ENCODE measurements at regions of chr4 and their contacts with region 1.

Region 1: GRCh38 chr4:151781026-151781425 is 20.2 kb upstream of the GATB start:
- DNase-seq: peak; percentile 61 to 77 (median 68)
- ATAC-seq: peak; percentile 94 to 96 (median 96)
- H3K4me3 ChIP-seq: no peak overlapping the region
- H3K27ac ChIP-seq: peak overlapping the region; percentile 18 to 86 (median 67)
- H3K4me1 ChIP-seq: peaks cover 0 to 32% (median 6%) of the 10 kb centered on the region in 12 donors
- H3K27me3 ChIP-seq: peaks cover 0 to 11% (median 0%) of the 10 kb centered on the region in 9 donors
- CTCF ChIP-seq: no peak
- POLR2A ChIP-seq: peak in 1 of 2 donors; percentile 30

Region 2: DNA sequence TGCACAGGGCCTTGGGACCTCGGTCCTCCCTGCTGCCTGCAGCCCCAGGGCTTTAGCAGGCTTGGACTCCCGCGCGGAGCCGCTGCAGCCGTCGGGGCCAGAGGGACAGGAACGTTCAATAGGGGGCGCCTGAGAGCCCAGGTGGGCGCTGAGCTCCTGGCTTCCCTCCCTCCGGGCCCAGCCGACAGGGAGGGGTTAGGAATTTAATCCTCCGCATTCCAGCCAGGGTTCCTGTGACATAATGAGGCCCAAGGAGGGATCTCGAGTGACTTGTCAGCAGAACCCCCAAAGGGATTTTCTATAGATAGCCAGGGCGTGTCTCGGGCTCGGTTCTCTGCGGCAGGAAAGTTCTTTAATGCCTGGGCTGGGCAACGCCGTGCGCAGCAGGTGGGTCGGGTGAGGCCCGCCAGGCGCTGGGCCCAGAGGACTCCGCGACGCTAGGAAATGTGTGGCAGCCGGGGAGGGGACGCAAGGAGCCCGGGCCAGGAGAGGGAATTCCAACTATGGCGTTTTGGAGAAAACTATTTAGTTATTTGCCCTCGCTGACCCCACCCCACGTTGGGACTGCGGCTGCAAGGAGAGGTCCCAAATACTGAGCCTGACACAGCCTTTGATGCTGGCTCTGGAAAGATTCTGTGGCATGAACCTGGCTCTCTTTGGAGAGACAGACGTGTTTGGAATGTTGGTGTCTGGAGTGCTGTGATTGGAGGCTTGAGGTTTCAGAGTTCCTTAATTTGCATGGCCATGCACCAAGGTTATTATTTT is 265.0 kb after region 1 on chr4:
- intact Hi-C with region 1: loop called in 1 of 10 experiments (anchors 10 kb)
- DNase-seq: peak in 4 of 5 donors; percentile 42 to 77 (median 46)
- ATAC-seq: peak in 3 of 4 donors; percentile 64 to 78 (median 68)
- H3K4me3 ChIP-seq: peak overlapping the region in 7 of 12 donors; percentile 4 to 24 (median 19)
- H3K27ac ChIP-seq: peak overlapping the region in 7 of 12 donors; percentile 23 to 66 (median 57)
- H3K4me1 ChIP-seq: peaks cover 0 to 17% (median 9%) of the 10 kb centered on the region in 12 donors
- H3K27me3 ChIP-seq: peaks cover 0 to 17% (median 0%) of the 10 kb centered on the region in 9 donors
- CTCF ChIP-seq: peak; percentile 44 to 73 (median 50)
- POLR2A ChIP-seq: no peak